ENCODE measurements at regions of chr7 and their contacts with region 1.

Region 1: GRCh38 chr7:130982160-130982638 is 248.2 kb upstream of the KLF14 start:
- DNase-seq: peak in 3 of 9 experiments; percentile 24 to 77 (median 67)
- ATAC-seq: peak; percentile 67
- H3K4me3 ChIP-seq: no peak overlapping the region
- H3K4me3 Mint-ChIP-seq: no peak overlapping the region
- H3K27ac ChIP-seq: peak overlapping the region; percentile 13 to 62
- H3K27ac Mint-ChIP-seq: no peak overlapping the region
- H3K4me1 ChIP-seq: peaks cover 59% of the 10 kb centered on the region
- H3K4me1 Mint-ChIP-seq: peaks cover 17% of the 10 kb centered on the region
- H3K27me3 ChIP-seq: no peaks in the 10 kb centered on the region
- H3K27me3 Mint-ChIP-seq: no peaks in the 10 kb centered on the region
- CTCF ChIP-seq: peak; percentile 82

Region 2: GRCh38 chr7:130994378-130995115 is 12.3 kb after region 1 on chr7:
- CTCF ChIA-PET with region 1: interaction called, 15 read pairs
- POLR2A ChIA-PET with region 1: no interaction called
- intact Hi-C with region 1: no loop called
- DNase-seq: no peak
- ATAC-seq: no peak
- H3K4me3 ChIP-seq: no peak overlapping the region
- H3K4me3 Mint-ChIP-seq: no peak overlapping the region
- H3K27ac ChIP-seq: peak overlapping the region in 1 of 2 experiments; percentile 16
- H3K27ac Mint-ChIP-seq: peak overlapping the region; percentile 37
- H3K4me1 ChIP-seq: peaks cover 76% of the 10 kb centered on the region
- H3K4me1 Mint-ChIP-seq: peaks cover 86% of the 10 kb centered on the region
- H3K27me3 ChIP-seq: no peaks in the 10 kb centered on the region
- H3K27me3 Mint-ChIP-seq: no peaks in the 10 kb centered on the region
- CTCF ChIP-seq: no peak

Region 3: DNA sequence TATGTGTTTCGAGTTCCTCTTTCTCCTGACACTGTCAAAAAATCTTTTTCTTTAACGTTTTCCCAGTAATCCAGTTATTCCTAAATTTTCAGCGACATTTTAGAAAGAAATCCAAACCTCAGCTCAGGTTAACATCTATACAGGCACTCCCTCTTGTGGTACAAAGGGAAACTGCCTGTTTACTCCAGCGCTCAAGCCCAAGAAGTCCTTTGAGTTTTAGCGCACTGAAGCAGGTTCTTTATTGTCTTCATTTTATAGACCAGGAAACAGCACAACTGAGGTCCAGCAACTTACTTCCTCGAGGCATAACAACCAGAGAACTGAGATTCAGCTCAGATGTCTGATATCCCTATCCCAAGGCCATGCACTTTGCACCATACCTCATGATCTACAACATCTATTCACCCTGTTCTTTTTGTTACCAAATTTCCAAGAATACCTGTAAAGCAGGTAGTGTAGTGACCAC is 58.3 kb after region 1 on chr7:
- CTCF ChIA-PET with region 1: interaction called, 17 read pairs
- POLR2A ChIA-PET with region 1: interaction called, 6 read pairs
- intact Hi-C with region 1: loop called in 1 of 2 experiments (anchors 1 kb)
- DNase-seq: peak in 3 of 9 experiments; percentile 49 to 81 (median 73)
- ATAC-seq: peak; percentile 54
- H3K4me3 ChIP-seq: no peak overlapping the region
- H3K4me3 Mint-ChIP-seq: peak overlapping the region; percentile 27
- H3K27ac ChIP-seq: peak overlapping the region in 1 of 2 experiments; percentile 3
- H3K27ac Mint-ChIP-seq: peak overlapping the region; percentile 24
- H3K4me1 ChIP-seq: peaks cover 46% of the 10 kb centered on the region
- H3K4me1 Mint-ChIP-seq: peaks cover 68% of the 10 kb centered on the region
- H3K27me3 ChIP-seq: no peaks in the 10 kb centered on the region
- H3K27me3 Mint-ChIP-seq: no peaks in the 10 kb centered on the region
- CTCF ChIP-seq: peak; percentile 94

Region 4: DNA sequence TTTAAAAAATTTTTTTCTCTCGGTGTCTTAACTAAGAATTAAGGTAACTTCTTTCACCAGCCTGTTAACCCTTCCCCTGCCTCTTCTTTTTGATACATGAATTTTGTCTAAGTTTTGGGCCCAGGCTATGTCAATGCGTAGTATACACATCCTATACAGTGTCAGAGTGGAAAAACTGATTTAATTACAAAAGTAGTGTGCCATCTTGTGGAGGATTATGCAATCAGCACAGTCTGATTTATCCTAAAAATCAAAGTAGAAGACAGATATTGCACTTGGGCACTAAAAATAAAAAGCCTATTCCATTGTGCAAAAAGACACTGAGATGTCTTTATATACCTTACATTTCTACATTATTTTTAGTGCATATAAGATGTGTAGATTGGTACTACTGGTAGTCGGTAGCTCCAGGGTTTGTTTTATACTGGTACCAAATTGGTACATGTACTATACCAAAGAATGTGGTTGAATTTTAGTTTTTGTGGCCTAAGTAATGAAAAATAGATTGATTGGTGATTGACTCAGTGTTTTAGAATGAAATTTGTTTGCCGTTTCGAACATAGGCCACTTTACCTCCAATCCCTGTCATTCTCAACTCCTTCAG is 442.1 kb after region 1 on chr7:
- CTCF ChIA-PET with region 1: interaction called, 7 read pairs
- POLR2A ChIA-PET with region 1: no interaction called
- intact Hi-C with region 1: loop called (anchors 1 to 5 kb)
- DNase-seq: peak in 2 of 9 experiments; percentile 48 to 62
- ATAC-seq: peak; percentile 97
- H3K4me3 ChIP-seq: no peak overlapping the region
- H3K4me3 Mint-ChIP-seq: no peak overlapping the region
- H3K27ac ChIP-seq: no peak overlapping the region
- H3K27ac Mint-ChIP-seq: no peak overlapping the region
- H3K4me1 ChIP-seq: no peaks in the 10 kb centered on the region
- H3K4me1 Mint-ChIP-seq: peaks cover 5% of the 10 kb centered on the region
- H3K27me3 ChIP-seq: no peaks in the 10 kb centered on the region
- H3K27me3 Mint-ChIP-seq: no peaks in the 10 kb centered on the region
- CTCF ChIP-seq: peak; percentile 74